ENCODE measurements at regions of chr20 and their contacts with region 1.

Region 1: DNA sequence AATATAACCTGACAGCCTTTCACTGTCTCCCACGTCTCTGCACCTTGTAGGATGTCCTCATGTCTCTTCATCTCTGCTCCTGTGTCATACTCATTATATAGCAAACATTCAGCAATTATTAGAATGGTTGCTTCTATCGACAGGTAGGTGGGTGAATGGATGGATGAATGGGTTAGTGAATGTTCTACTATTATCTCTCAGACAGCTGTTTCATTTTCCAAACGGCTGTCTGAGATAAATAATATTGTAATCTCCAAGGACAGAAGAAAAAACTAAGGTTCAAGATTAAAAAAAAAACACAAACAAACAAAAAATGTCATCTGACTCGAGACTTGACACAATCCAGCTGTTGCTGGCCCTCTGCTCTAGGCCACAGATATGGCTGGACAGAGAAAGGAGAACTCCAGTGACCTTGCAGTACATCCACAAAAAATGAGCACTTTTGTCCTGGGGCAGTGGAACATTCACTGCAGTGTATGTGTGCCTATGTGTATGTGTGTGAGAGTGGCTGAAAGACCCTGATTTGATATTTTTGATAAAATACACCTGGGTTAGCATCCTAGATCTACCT is 2.1 kb downstream of the HNF4A start:
- DNase-seq: no peak
- ATAC-seq: no peak
- H3K4me3 ChIP-seq: no peak overlapping the region
- H3K4me3 Mint-ChIP-seq: no peak overlapping the region
- H3K27ac ChIP-seq: no peak overlapping the region
- H3K27ac Mint-ChIP-seq: no peak overlapping the region
- H3K4me1 ChIP-seq: no peaks in the 10 kb centered on the region
- H3K4me1 Mint-ChIP-seq: no peaks in the 10 kb centered on the region
- H3K27me3 ChIP-seq: peaks cover 2 to 15% of the 10 kb centered on the region in 2 experiments
- H3K27me3 Mint-ChIP-seq: peaks cover 0 to 12% of the 10 kb centered on the region in 2 donors

Region 2: GRCh38 chr20:44388466-44389023 is 30.9 kb after region 1 on chr20:
- CTCF ChIA-PET with region 1: no interaction called
- POLR2A ChIA-PET with region 1: interaction called in 1 of 2 experiments, 11 read pairs
- DNase-seq: peak; percentile 19 to 75 (median 54)
- ATAC-seq: peak; percentile 69 to 89 (median 78)
- H3K4me3 ChIP-seq: no peak overlapping the region
- H3K4me3 Mint-ChIP-seq: peak overlapping the region in 1 of 3 donors; percentile 40
- H3K27ac ChIP-seq: no peak overlapping the region
- H3K27ac Mint-ChIP-seq: no peak overlapping the region
- H3K4me1 ChIP-seq: peaks cover 0 to 10% of the 10 kb centered on the region in 2 experiments
- H3K4me1 Mint-ChIP-seq: peaks cover 9 to 19% (median 10%) of the 10 kb centered on the region in 3 donors
- H3K27me3 ChIP-seq: peaks cover 0 to 33% of the 10 kb centered on the region in 2 experiments
- H3K27me3 Mint-ChIP-seq: peaks cover 11 to 12% of the 10 kb centered on the region in 2 donors

Region 3: GRCh38 chr20:45946149-45946970 is 1588.7 kb after region 1 on chr20:
- CTCF ChIA-PET with region 1: no interaction called
- POLR2A ChIA-PET with region 1: interaction called in 1 of 2 experiments, 10 read pairs
- DNase-seq: peak in 19 of 35 experiments; percentile 21 to 66 (median 37)
- ATAC-seq: peak in 3 of 4 experiments; percentile 35 to 65 (median 52)
- H3K4me3 ChIP-seq: no peak overlapping the region
- H3K4me3 Mint-ChIP-seq: no peak overlapping the region
- H3K27ac ChIP-seq: peak overlapping the region; percentile 50
- H3K27ac Mint-ChIP-seq: peak overlapping the region; percentile 62 to 78
- H3K4me1 ChIP-seq: peaks cover 0 to 33% of the 10 kb centered on the region in 2 experiments
- H3K4me1 Mint-ChIP-seq: peaks cover 0 to 25% (median 13%) of the 10 kb centered on the region in 3 donors
- H3K27me3 ChIP-seq: no peaks in the 10 kb centered on the region
- H3K27me3 Mint-ChIP-seq: no peaks in the 10 kb centered on the region